Spleen (tissue), 13 donors: ENCODE measurements at regions of chr7 and their contacts with region 1.

Region 1: GRCh38 chr7:138738551-138739335 is 37.6 kb upstream of the SVOPL start:
- DNase-seq: peak; percentile 89
- H3K4me3 ChIP-seq: no peak overlapping the region
- H3K27ac ChIP-seq: no peak overlapping the region
- H3K4me1 ChIP-seq: peaks cover 0 to 5% (median 0%) of the 10 kb centered on the region in 6 donors
- H3K27me3 ChIP-seq: no peaks in the 10 kb centered on the region
- CTCF ChIP-seq: peak; percentile 44 to 89 (median 82)
- POLR2A ChIP-seq: no peak

Region 2: DNA sequence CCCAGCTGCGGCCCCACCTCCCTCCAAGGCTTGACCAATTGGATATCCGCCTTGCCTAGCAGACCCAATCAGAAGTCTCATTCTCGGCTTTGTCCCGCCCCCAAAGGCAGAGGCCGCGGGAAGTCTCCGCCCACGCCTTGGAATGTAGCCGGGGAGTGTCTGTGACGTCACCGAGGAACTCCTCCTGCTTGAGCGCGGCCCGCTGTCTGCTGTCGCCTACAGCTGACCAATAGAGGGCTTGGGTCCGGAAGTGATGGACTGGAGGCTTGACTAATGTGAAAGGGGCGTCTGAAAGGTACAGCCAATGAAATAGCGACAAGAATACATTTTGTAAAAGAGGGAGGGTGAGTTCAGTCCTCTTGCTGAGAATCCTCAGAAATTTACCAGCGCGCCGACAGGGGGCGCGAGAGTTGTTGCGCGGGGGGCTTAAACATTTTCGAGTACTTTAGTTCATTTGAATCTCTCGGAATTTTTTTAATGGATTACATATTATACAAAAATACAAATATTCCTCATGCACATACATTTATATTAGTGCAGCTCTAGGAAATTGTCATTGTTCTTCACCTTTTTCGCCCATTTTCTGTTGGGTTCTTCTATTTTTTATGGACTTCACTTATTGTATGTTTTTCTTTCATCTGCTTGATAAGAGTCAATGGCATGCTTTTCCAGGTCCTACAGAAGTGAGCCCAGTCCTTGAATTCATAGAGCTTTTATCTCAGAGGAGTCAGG is 736.5 kb before region 1 on chr7:
- intact Hi-C with region 1: loop called (anchors 5 kb)
- DNase-seq: peak; percentile 98
- H3K4me3 ChIP-seq: peak overlapping the region; percentile 75 to 99 (median 90)
- H3K27ac ChIP-seq: peak overlapping the region; percentile 79 to 95 (median 90)
- H3K4me1 ChIP-seq: peaks cover 21 to 51% (median 31%) of the 10 kb centered on the region in 6 donors
- H3K27me3 ChIP-seq: no peaks in the 10 kb centered on the region
- CTCF ChIP-seq: peak; percentile 89 to 98 (median 94)
- POLR2A ChIP-seq: peak in 1 of 3 donors; percentile 11

Region 3: DNA sequence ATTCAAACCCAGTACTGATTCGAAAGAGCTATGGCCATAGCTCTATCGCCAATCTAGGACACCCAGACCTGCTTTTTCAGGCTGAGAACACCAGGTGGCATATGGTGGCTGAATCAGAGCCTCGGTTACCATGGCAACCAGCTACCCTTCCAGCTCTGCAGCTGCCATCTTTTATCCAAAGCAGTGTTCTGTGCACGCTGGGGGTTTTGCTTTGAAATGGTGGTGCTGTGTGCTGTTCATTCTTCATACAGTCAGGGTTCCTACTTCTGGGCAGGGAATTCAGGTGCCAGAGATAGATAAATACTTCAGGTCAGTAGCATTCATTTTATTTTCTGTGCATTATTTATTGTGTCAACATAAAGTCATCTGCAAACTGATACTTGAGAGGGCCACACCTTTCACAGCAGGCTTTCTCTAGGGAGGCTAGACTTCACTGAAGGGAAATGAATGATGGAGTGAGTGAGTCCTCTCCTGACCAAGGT is 577.1 kb before region 1 on chr7:
- intact Hi-C with region 1: loop called (anchors 5 kb)
- DNase-seq: peak; percentile 84
- H3K4me3 ChIP-seq: no peak overlapping the region
- H3K27ac ChIP-seq: no peak overlapping the region
- H3K4me1 ChIP-seq: peaks cover 0 to 6% (median 0%) of the 10 kb centered on the region in 6 donors
- H3K27me3 ChIP-seq: no peaks in the 10 kb centered on the region
- CTCF ChIP-seq: peak; percentile 38 to 83 (median 67)
- POLR2A ChIP-seq: no peak

Region 4: DNA sequence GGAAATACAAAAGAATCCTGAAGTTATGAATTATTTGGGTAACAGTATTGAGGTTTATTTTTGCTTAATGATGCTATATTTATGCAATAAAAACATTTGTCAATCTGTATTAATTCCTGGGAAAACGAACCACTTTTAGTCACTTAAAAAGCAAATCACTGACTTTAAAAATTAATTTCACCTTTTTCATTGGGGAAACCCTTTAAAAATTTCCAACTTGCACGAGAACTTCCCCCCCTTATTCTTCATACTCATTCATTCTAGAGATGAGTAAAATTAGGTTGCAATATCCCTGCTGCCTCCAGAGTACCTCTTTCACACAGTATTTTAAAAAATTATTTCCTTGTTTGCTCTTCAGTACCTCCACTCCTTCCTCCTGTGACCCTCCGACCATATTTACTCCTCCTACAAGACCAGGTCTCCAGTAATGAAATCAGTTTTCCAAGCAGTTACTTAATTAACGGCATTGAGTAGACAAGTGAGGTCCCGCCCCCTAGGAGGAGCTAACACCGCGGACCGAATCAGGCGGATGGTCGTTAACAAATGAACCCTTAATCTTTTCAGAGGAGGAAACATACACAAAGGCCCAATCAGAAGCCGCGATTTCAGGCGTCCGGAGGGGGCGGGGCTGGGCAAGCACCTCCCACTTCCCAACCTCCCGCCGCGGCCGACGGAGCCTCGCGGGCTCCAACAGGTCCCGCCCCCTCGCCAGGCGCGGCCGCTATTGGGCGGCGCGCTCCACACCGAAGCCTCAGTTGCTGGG is 279.1 kb before region 1 on chr7:
- intact Hi-C with region 1: loop called (anchors 10 kb)
- DNase-seq: no peak
- H3K4me3 ChIP-seq: peak overlapping the region; percentile 10 to 93 (median 74)
- H3K27ac ChIP-seq: peak overlapping the region in 7 of 8 donors; percentile 92 to 98 (median 95)
- H3K4me1 ChIP-seq: peaks cover 6 to 28% (median 18%) of the 10 kb centered on the region in 6 donors
- H3K27me3 ChIP-seq: no peaks in the 10 kb centered on the region
- CTCF ChIP-seq: peak in 8 of 11 experiments; percentile 3 to 51 (median 38)
- POLR2A ChIP-seq: peak in 1 of 3 donors; percentile 39

Region 5: GRCh38 chr7:138691178-138691577 is 47.6 kb before region 1 on chr7:
- intact Hi-C with region 1: no loop called
- DNase-seq: no peak
- H3K4me3 ChIP-seq: no peak overlapping the region
- H3K27ac ChIP-seq: no peak overlapping the region
- H3K4me1 ChIP-seq: no peaks in the 10 kb centered on the region
- H3K27me3 ChIP-seq: peaks cover 0 to 7% (median 0%) of the 10 kb centered on the region in 7 donors
- CTCF ChIP-seq: no peak
- POLR2A ChIP-seq: no peak